CD4-positive, alpha-beta memory T cell (primary cell): ENCODE measurements at regions of chr6 and their contacts with region 1.

Region 1: GRCh38 chr6:158567871-158568401 is 8.0 kb downstream of the TMEM181 start:
- DNase-seq: peak in 4 of 5 donors; percentile 10 to 32 (median 24)
- H3K4me3 ChIP-seq: peak overlapping the region in 1 of 2 donors; percentile 36
- H3K4me3 Mint-ChIP-seq: peak overlapping the region; percentile 66 to 90 (median 86)
- H3K27ac ChIP-seq: peak overlapping the region; percentile 50
- H3K27ac Mint-ChIP-seq: peak overlapping the region; percentile 87 to 97 (median 95)
- H3K4me1 ChIP-seq: peaks cover 79% of the 10 kb centered on the region
- H3K4me1 Mint-ChIP-seq: peaks cover 58 to 90% (median 76%) of the 10 kb centered on the region in 4 donors
- H3K27me3 ChIP-seq: no peaks in the 10 kb centered on the region
- H3K27me3 Mint-ChIP-seq: no peaks in the 10 kb centered on the region

Region 2: DNA sequence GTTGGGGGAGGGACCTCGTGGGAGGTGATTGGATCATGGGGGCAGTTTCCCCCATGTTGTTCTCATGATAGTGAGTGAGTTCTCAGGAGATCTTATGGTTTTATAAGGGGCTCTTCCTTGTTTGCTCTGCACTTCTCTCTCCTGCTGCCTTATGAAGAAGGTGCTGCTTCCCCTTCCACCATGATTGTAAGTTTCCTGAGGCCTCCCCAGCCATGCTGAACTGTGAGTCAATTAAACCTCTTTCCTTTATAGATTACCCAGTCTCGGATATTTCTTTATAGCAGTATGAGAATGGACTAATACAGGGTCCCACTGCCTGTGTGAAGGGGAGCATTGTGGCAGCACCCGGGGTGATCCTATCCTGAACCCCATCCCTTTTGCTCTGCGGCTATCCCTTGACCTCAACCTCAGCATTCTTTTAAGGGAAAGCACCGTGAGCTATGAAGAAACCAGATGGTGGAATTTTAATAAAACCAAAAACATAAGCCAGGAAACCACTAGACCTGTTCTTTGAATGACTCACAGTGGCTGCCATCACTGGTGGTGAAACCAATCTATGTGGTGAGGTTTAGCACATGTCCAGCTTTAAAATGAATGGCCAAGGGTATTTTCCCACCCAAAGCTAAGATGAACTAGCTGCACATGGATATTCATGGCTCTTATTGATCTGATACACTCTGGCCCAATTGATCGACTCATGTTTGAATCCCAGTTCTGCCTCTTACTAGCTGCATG is 1124.7 kb before region 1 on chr6:
- CTCF ChIA-PET with region 1: no interaction called
- POLR2A ChIA-PET with region 1: no interaction called
- intact Hi-C with region 1: no loop called
- DNase-seq: no peak
- H3K4me3 ChIP-seq: no peak overlapping the region
- H3K4me3 Mint-ChIP-seq: no peak overlapping the region
- H3K27ac ChIP-seq: no peak overlapping the region
- H3K27ac Mint-ChIP-seq: peak overlapping the region in 1 of 7 donors; percentile 82
- H3K4me1 ChIP-seq: no peaks in the 10 kb centered on the region
- H3K4me1 Mint-ChIP-seq: peaks cover 0 to 1% (median 0%) of the 10 kb centered on the region in 4 donors
- H3K27me3 ChIP-seq: no peaks in the 10 kb centered on the region
- H3K27me3 Mint-ChIP-seq: no peaks in the 10 kb centered on the region

Region 3: DNA sequence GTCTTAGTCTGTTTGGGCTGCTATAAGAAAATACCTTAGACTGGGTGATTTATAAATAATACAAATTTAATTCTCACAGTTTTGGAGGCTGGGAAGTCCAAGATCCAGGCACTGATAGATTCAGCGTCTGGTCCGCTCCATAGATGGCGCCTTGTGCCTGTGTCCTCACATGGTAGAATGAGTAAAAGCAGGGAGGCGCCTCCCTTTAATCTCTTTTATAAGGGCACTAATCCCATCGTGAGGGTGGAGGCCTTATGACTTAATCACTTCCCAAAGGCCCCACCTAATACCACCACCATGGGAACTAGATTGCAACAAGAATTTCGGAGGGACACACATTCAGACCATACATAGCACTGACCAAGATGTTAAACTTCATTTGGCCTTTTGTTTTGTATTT is 99.3 kb before region 1 on chr6:
- CTCF ChIA-PET with region 1: no interaction called
- POLR2A ChIA-PET with region 1: no interaction called
- intact Hi-C with region 1: no loop called
- DNase-seq: no peak
- H3K4me3 ChIP-seq: no peak overlapping the region
- H3K4me3 Mint-ChIP-seq: no peak overlapping the region
- H3K27ac ChIP-seq: no peak overlapping the region
- H3K27ac Mint-ChIP-seq: peak overlapping the region in 1 of 7 donors; percentile 42
- H3K4me1 ChIP-seq: no peaks in the 10 kb centered on the region
- H3K4me1 Mint-ChIP-seq: peaks cover 0 to 3% (median 0%) of the 10 kb centered on the region in 4 donors
- H3K27me3 ChIP-seq: no peaks in the 10 kb centered on the region
- H3K27me3 Mint-ChIP-seq: no peaks in the 10 kb centered on the region

Region 4: GRCh38 chr6:158605266-158605878 is 37.4 kb after region 1 on chr6:
- CTCF ChIA-PET with region 1: interaction called, 17 read pairs
- POLR2A ChIA-PET with region 1: no interaction called
- intact Hi-C with region 1: no loop called
- DNase-seq: peak; percentile 36 to 53 (median 51)
- H3K4me3 ChIP-seq: no peak overlapping the region
- H3K4me3 Mint-ChIP-seq: no peak overlapping the region
- H3K27ac ChIP-seq: no peak overlapping the region
- H3K27ac Mint-ChIP-seq: peak overlapping the region in 5 of 7 donors; percentile 7 to 80 (median 76)
- H3K4me1 ChIP-seq: no peaks in the 10 kb centered on the region
- H3K4me1 Mint-ChIP-seq: peaks cover 5 to 15% (median 14%) of the 10 kb centered on the region in 4 donors
- H3K27me3 ChIP-seq: no peaks in the 10 kb centered on the region
- H3K27me3 Mint-ChIP-seq: no peaks in the 10 kb centered on the region

Region 5: GRCh38 chr6:159203304-159204005 is 635.5 kb after region 1 on chr6:
- CTCF ChIA-PET with region 1: no interaction called
- POLR2A ChIA-PET with region 1: no interaction called
- intact Hi-C with region 1: no loop called
- DNase-seq: no peak
- H3K4me3 ChIP-seq: no peak overlapping the region
- H3K4me3 Mint-ChIP-seq: no peak overlapping the region
- H3K27ac ChIP-seq: no peak overlapping the region
- H3K27ac Mint-ChIP-seq: no peak overlapping the region
- H3K4me1 ChIP-seq: no peaks in the 10 kb centered on the region
- H3K4me1 Mint-ChIP-seq: no peaks in the 10 kb centered on the region
- H3K27me3 ChIP-seq: no peaks in the 10 kb centered on the region
- H3K27me3 Mint-ChIP-seq: peaks cover 7 to 18% of the 10 kb centered on the region in 2 donors